AG04449 (cell line): ENCODE measurements at regions of chr11 and their contacts with region 1.

Region 1: GRCh38 chr11:48109046-48109666 is 107.5 kb upstream of the OR4B1 start:
- DNase-seq: no peak
- H3K4me3 ChIP-seq: no peak overlapping the region
- CTCF ChIP-seq: peak; percentile 20

Region 2: DNA sequence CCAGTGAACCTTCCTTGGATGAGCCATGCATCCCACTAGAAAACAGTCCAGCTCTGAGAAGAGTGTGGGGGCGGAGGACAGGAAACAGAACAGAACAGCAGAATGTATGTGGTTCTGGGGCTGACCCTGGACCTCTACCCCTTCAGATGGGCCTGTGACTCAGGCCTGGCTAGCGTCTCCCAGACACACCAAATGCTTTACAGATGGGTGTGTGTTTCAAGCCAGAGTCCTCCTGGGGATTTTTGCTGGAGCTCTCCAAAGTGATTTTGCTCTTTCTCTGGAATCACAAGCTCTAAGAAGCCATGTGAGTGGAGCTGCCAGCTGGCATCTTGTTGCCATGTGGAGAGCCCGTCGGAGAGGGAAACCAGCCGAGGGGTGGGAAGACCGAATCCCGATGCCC is 501.8 kb before region 1 on chr11:
- CTCF ChIA-PET with region 1: no interaction called
- POLR2A ChIA-PET with region 1: no interaction called
- DNase-seq: peak; percentile 76
- H3K4me3 ChIP-seq: no peak overlapping the region; the same call in 1 of the 2 replicates
- CTCF ChIP-seq: no peak

Region 3: GRCh38 chr11:47946682-47947575 is 162.2 kb before region 1 on chr11:
- CTCF ChIA-PET with region 1: interaction called, 591 read pairs
- POLR2A ChIA-PET with region 1: no interaction called
- DNase-seq: peak; percentile 63
- H3K4me3 ChIP-seq: no peak overlapping the region
- CTCF ChIP-seq: no peak

Region 4: DNA sequence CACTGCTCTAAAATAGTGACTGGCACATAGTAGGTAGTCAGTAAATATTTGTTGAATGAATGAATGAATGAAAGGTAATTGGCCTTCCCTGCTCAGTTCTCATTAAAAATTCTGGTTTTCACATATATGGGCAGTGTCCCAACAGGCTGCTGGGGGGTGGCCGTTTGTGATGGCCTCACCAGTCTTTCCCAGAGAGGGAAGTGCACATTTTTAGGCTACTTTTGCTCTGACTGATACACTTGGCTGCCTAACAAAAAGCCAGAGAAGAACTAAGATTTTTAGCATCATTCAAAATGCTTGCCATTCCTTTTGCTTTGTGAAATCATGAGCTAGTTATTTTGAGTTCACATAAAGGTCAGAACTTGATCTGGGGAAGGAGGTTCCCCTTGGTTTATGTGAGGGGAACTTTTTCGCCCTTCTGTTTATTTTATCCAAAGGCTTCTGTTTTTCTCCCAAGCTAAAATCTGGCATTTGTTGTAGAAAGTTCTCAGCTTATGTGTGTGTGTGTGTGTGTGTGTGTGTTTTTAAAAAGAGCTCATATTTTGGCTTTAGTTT is 45.7 kb before region 1 on chr11:
- CTCF ChIA-PET with region 1: interaction called, 27 read pairs
- POLR2A ChIA-PET with region 1: no interaction called
- DNase-seq: peak; percentile 98
- H3K4me3 ChIP-seq: no peak overlapping the region
- CTCF ChIP-seq: no peak

Region 5: DNA sequence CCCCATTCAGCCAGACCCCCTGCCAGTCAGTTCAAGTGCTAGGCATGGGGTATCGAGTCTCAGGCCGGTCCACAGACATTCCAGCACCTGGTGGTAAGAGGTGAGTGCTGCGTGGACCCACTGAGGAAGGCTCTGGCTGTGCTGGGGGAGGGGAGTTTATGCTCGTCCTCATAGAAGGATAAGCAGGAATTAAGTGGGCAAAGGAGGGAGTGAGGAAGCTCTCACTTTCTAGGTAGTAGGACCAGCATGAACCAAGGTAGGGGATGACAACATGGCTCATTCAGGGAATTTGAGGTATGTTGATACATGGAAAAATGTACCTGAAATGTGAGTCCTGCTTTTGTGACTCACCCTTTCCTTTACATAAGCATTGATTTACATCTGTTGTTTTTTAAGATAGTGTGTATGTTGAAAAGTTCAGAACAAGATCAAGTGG is 12.1 kb before region 1 on chr11:
- CTCF ChIA-PET with region 1: interaction called, 95 read pairs
- POLR2A ChIA-PET with region 1: no interaction called
- DNase-seq: no peak
- H3K4me3 ChIP-seq: no peak overlapping the region
- CTCF ChIP-seq: no peak

Region 6: GRCh38 chr11:48154151-48154550 is 45.0 kb after region 1 on chr11:
- CTCF ChIA-PET with region 1: no interaction called
- POLR2A ChIA-PET with region 1: no interaction called
- DNase-seq: no peak
- H3K4me3 ChIP-seq: no peak overlapping the region
- CTCF ChIP-seq: no peak

Region 7: DNA sequence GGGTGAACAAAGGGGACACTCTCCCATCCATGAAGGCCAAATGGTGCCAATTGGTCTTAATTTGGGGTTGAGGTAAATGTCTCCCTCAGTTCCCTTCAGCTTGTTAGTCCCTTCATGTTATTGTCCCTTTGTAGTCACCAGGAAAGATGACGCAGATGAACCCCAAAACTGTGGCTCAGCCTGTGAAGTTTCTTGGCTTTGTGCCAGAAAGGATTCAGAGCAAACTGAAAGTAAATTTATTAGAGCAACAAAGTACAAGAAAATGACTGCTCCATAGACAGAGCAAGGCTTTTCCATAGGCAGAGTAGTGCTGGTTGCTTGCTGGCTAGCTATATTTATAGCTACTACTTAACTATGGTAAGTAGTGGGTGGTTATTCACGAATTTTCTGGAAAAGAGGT is 232.3 kb after region 1 on chr11:
- CTCF ChIA-PET with region 1: no interaction called
- POLR2A ChIA-PET with region 1: no interaction called
- DNase-seq: no peak
- H3K4me3 ChIP-seq: no peak overlapping the region
- CTCF ChIP-seq: no peak